ENCODE measurements at regions of chr3 and their contacts with region 1.

Region 1: GRCh38 chr3:8301728-8302462 is 199.7 kb upstream of the LMCD1 start:
- DNase-seq: no peak
- H3K4me3 ChIP-seq: no peak overlapping the region
- H3K27me3 ChIP-seq: no peaks in the 10 kb centered on the region; the same call in 1 of the 2 replicates
- CTCF ChIP-seq: peak; percentile 74

Region 2: DNA sequence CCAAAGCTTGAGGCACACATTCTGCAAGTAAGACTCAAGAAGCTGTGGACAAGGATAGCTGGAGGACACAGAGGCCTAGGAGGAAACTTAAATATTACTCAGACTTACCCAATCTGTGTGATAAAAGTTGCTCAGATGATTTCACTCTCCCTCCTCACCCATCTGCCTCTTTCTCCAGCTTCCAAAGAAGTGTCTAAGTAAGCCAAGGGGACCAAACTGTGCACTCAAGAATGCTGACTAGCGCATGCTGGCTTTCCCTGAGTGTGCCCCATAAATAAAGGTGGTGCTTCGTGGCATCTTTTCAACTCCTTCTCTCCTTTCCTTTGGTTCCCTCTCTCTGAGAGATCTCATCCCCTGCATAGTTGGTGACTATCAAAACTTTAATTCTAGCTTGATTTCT is 11.3 kb before region 1 on chr3:
- CTCF ChIA-PET with region 1: interaction called, 22 read pairs
- POLR2A ChIA-PET with region 1: no interaction called
- DNase-seq: no peak
- H3K4me3 ChIP-seq: no peak overlapping the region
- H3K27me3 ChIP-seq: no peaks in the 10 kb centered on the region
- CTCF ChIP-seq: no peak

Region 3: DNA sequence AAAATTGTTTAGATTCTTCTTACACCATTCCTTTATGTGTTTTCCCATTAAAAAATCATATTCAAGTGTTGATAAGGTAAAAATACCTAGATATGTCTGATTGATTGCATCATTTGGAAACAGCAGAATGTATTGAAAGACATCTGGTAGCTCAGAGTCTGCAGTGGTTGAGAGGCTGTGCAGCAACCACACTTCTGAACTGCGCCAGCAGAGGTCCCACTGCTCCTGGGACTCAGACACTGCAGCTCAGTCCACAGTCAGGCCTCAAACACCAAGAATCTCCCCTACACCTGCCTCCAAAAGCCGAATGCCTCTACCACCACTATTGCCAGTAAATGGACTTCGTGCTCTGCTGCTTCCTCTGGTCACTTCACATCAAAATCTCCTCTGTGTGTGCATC is 22.8 kb after region 1 on chr3:
- CTCF ChIA-PET with region 1: interaction called, 21 read pairs
- POLR2A ChIA-PET with region 1: no interaction called
- DNase-seq: no peak
- H3K4me3 ChIP-seq: no peak overlapping the region
- H3K27me3 ChIP-seq: 0 out of 2 replicates have a peak, but pooled peaks cover 4% of the 10 kb centered on the region
- CTCF ChIP-seq: peak; percentile 54

Region 4: GRCh38 chr3:8336456-8336855 is 34.6 kb after region 1 on chr3:
- CTCF ChIA-PET with region 1: no interaction called
- POLR2A ChIA-PET with region 1: no interaction called
- DNase-seq: no peak
- H3K4me3 ChIP-seq: no peak overlapping the region
- H3K27me3 ChIP-seq: no peaks in the 10 kb centered on the region
- CTCF ChIP-seq: peak; percentile 27; the same call in 1 of the 2 replicates